H1 (cell line): ENCODE measurements at regions of chr1 and their contacts with region 1.

Region 1: DNA sequence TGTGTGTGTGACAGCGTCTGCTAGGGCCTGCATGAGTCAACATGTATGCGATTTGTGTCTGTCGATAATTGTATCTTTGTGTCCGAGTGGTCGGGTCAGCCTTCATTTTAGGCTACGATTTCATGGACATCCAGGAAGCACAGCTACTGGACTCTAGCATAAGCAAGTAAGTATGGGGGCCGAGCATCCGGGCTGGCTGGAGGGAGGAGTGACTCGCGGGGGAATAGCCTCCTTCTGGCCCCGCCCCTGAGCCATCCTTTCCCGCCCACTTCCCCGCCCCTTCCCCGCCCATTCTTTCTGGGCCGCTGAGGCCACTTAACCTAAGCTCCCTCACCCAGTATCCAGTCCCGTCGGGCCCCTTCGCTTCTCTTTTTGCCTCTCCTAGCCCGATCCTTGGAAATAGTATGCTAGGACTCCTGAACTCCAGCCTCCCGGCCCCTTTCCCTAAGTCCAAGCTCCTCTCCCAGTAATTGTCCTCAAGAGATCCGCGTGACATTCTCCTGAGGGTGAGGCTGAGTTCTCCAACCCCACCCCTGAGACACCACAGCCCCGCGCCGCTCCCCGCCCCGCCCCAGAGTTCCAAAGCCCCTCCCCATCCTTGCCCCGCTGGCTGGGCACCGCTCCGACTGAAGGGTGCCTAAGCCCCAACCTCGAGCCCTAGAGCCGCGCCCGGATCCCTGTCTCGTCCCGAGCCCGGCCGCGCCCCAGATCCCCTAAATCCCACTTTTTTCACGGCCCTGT is 1.2 kb downstream of the MAP3K6 start:
- DNase-seq: peak in 1 of 2 experiments; percentile 86
- H3K4me3 ChIP-seq: peak overlapping the region; percentile 62 to 71 (median 64)
- H3K27ac ChIP-seq: no peak overlapping the region
- H3K4me1 ChIP-seq: peaks cover 6 to 20% (median 8%) of the 10 kb centered on the region in 4 experiments
- H3K27me3 ChIP-seq: peaks cover 5 to 15% (median 11%) of the 10 kb centered on the region in 4 experiments; a peak in 6 of 7 replicates
- CTCF ChIP-seq: no peak
- EP300 ChIP-seq: peak in 1 of 2 experiments; percentile 98; a peak in 1 of 3 replicates
- POLR2A ChIP-seq: peak in 1 of 2 experiments; percentile 51; a peak in 2 of 3 replicates
- RAD21 ChIP-seq: no peak

Region 2: GRCh38 chr1:27341525-27342252 is 23.9 kb before region 1 on chr1 and contains the start of gene SYTL1:
- CTCF ChIA-PET with region 1: interaction called, 10 read pairs
- POLR2A ChIA-PET with region 1: interaction called, 5 read pairs
- DNase-seq: peak in 1 of 2 experiments; percentile 73
- H3K4me3 ChIP-seq: peak within 1 kb of the TSS; percentile 16 to 64 (median 44)
- H3K27ac ChIP-seq: no peak within 1 kb of the TSS
- H3K4me1 ChIP-seq: peaks cover 0 to 25% (median 20%) of the 10 kb centered on the region in 4 experiments; a peak in 6 of 7 replicates
- H3K27me3 ChIP-seq: peaks cover 0 to 2% (median 0%) of the 10 kb centered on the region in 4 experiments; a peak in 1 of 7 replicates
- CTCF ChIP-seq: no peak
- EP300 ChIP-seq: no peak
- POLR2A ChIP-seq: no peak
- RAD21 ChIP-seq: no peak
- total RNA-seq, gene SYTL1: 6.4 and 8.8 TPM in 2 replicates

Region 3: DNA sequence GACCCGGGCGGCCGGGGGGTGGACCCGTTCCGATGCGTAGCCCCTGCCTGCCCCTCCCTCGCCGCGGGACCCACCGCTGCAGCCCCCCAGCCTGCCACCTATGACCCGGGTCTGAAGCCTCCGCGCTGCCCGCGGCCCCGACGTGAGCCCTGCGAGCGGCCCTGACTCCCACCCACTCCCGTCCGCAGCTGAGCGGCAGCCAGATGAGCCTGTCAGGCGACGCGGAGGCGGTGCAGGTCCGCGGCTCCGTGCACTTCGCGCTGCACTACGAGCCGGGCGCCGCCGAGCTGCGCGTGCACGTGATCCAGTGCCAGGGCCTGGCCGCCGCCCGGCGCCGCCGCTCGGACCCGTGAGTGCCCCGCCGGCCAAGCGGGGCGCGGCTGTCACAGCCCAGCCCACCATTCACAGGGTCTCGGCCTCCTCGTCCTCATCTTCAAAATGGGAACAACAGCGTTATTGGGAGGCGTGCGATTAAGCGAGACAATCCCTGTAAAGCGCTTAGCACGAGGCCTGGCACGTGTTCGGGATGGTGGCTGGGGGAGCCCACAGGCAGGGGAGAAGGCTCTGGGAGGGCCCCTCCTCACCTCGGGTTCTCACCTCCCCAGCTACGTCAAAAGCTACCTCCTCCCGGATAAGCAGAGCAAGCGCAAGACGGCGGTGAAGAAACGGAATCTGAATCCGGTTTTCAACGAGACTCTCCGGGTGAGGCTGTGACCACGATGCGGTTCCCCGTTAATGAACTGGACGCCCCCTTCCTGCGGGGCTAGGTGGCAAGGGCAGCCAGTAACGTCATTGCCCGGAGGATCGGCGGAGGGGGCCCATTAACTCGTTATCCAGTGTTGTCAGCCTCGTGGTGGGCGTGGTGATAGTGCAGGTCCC is 15.5 kb before region 1 on chr1:
- CTCF ChIA-PET with region 1: interaction called, 164 read pairs
- POLR2A ChIA-PET with region 1: interaction called, 101 read pairs
- DNase-seq: peak in 1 of 2 experiments; percentile 83
- H3K4me3 ChIP-seq: peak overlapping the region; percentile 47 to 63 (median 51)
- H3K27ac ChIP-seq: no peak overlapping the region
- H3K4me1 ChIP-seq: peaks cover 0 to 20% (median 8%) of the 10 kb centered on the region in 4 experiments; a peak in 6 of 7 replicates
- H3K27me3 ChIP-seq: peaks cover 0 to 8% (median 6%) of the 10 kb centered on the region in 4 experiments; a peak in 5 of 7 replicates
- CTCF ChIP-seq: no peak
- EP300 ChIP-seq: no peak; a peak in 1 of 3 replicates
- POLR2A ChIP-seq: 0 out of 3 replicates have a peak, but pooled peaks of 1 of the 2 experiments have one; percentile 24
- RAD21 ChIP-seq: no peak

Region 4: GRCh38 chr1:27383039-27383605 is 17.6 kb after region 1 on chr1 and contains the start of gene CD164L2:
- CTCF ChIA-PET with region 1: interaction called, 625 read pairs
- POLR2A ChIA-PET with region 1: interaction called, 18 read pairs
- DNase-seq: peak in 1 of 2 experiments; percentile 100
- H3K4me3 ChIP-seq: peak within 1 kb of the TSS; percentile 36 to 74 (median 52)
- H3K27ac ChIP-seq: no peak within 1 kb of the TSS
- H3K4me1 ChIP-seq: peaks cover 0 to 7% (median under 1%) of the 10 kb centered on the region in 4 experiments; a peak in 3 of 7 replicates
- H3K27me3 ChIP-seq: peaks cover 0 to 16% (median 9%) of the 10 kb centered on the region in 4 experiments; a peak in 6 of 7 replicates
- CTCF ChIP-seq: no peak
- EP300 ChIP-seq: no peak
- POLR2A ChIP-seq: peak in 1 of 2 experiments; percentile 54; a peak in 1 of 3 replicates
- RAD21 ChIP-seq: no peak
- total RNA-seq, gene CD164L2: 3.3 and 3.8 TPM in 2 replicates

Region 5: GRCh38 chr1:27473755-27474154 is 108.2 kb after region 1 on chr1:
- CTCF ChIA-PET with region 1: no interaction called
- POLR2A ChIA-PET with region 1: no interaction called
- DNase-seq: no peak
- H3K4me3 ChIP-seq: no peak overlapping the region
- H3K27ac ChIP-seq: no peak overlapping the region
- H3K4me1 ChIP-seq: no peaks in the 10 kb centered on the region; a peak in 1 of 7 replicates
- H3K27me3 ChIP-seq: no peaks in the 10 kb centered on the region
- CTCF ChIP-seq: no peak
- EP300 ChIP-seq: no peak
- POLR2A ChIP-seq: no peak
- RAD21 ChIP-seq: no peak